ENCODE measurements at regions of chr3 and their contacts with region 1.

Region 1: DNA sequence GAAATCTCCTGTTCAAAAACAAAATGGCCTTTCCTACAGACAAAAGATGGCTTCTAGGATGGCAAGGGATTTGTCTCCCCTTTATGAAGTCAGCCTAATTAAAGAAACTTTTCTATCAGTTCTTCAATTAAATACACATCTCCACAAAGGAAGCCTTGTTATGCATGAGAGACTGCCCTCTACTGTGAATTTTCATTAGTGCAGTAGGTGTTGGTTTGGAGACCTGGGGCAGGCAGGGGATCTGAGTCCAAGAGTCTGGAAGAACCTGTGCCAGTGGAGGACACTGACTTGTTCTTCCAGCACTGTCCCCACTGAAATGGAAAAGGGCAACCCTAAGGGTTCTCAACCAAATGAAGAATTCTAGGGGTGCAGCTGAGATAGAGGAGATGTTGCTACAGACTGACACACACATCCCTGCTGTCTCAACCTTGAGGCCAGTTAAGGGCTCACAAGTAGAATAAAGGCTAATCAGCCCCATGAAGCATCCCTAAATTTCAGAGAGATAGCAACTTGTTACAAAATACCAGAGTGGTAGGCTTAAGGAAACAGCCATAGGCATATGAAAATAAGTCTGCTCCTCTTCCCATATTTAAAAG is 174.0 kb upstream of the PRICKLE2 start:
- DNase-seq: peak; percentile 77
- H3K4me3 ChIP-seq: no peak overlapping the region
- H3K27ac ChIP-seq: no peak overlapping the region
- H3K4me1 ChIP-seq: no peaks in the 10 kb centered on the region
- H3K27me3 ChIP-seq: peaks cover 0 to 6% of the 10 kb centered on the region in 2 experiments
- CTCF ChIP-seq: peak; percentile 61 to 63
- POLR2A ChIP-seq: no peak

Region 2: GRCh38 chr3:64030741-64031140 is 368.6 kb before region 1 on chr3:
- CTCF ChIA-PET with region 1: interaction called, 112 read pairs
- POLR2A ChIA-PET with region 1: no interaction called
- dilution Hi-C with region 1: no loop called
- intact Hi-C with region 1: loop called (anchors 1 kb)
- DNase-seq: peak; percentile 66
- H3K4me3 ChIP-seq: peak overlapping the region in 1 of 3 experiments; percentile 4
- H3K27ac ChIP-seq: no peak overlapping the region
- H3K4me1 ChIP-seq: no peaks in the 10 kb centered on the region
- H3K27me3 ChIP-seq: peaks cover 19 to 45% of the 10 kb centered on the region in 2 experiments
- CTCF ChIP-seq: peak; percentile 77 to 82
- POLR2A ChIP-seq: no peak

Region 3: GRCh38 chr3:64244011-64244942 is 155.0 kb before region 1 on chr3:
- CTCF ChIA-PET with region 1: interaction called, 5 read pairs
- POLR2A ChIA-PET with region 1: no interaction called
- dilution Hi-C with region 1: no loop called
- intact Hi-C with region 1: loop called (anchors 1 kb)
- DNase-seq: peak; percentile 41
- H3K4me3 ChIP-seq: no peak overlapping the region
- H3K27ac ChIP-seq: no peak overlapping the region
- H3K4me1 ChIP-seq: no peaks in the 10 kb centered on the region
- H3K27me3 ChIP-seq: peaks cover 0 to 4% of the 10 kb centered on the region in 2 experiments
- CTCF ChIP-seq: peak; percentile 42 to 51
- POLR2A ChIP-seq: no peak

Region 4: GRCh38 chr3:64262574-64263114 is 136.7 kb before region 1 on chr3:
- CTCF ChIA-PET with region 1: interaction called, 15 read pairs
- POLR2A ChIA-PET with region 1: no interaction called
- dilution Hi-C with region 1: no loop called
- intact Hi-C with region 1: loop called (anchors 1 kb)
- DNase-seq: no peak
- H3K4me3 ChIP-seq: no peak overlapping the region
- H3K27ac ChIP-seq: no peak overlapping the region
- H3K4me1 ChIP-seq: peaks cover 17% of the 10 kb centered on the region
- H3K27me3 ChIP-seq: peaks cover 4% of the 10 kb centered on the region in 2 experiments
- CTCF ChIP-seq: peak in 1 of 2 donors; percentile 5
- POLR2A ChIP-seq: no peak

Region 5: DNA sequence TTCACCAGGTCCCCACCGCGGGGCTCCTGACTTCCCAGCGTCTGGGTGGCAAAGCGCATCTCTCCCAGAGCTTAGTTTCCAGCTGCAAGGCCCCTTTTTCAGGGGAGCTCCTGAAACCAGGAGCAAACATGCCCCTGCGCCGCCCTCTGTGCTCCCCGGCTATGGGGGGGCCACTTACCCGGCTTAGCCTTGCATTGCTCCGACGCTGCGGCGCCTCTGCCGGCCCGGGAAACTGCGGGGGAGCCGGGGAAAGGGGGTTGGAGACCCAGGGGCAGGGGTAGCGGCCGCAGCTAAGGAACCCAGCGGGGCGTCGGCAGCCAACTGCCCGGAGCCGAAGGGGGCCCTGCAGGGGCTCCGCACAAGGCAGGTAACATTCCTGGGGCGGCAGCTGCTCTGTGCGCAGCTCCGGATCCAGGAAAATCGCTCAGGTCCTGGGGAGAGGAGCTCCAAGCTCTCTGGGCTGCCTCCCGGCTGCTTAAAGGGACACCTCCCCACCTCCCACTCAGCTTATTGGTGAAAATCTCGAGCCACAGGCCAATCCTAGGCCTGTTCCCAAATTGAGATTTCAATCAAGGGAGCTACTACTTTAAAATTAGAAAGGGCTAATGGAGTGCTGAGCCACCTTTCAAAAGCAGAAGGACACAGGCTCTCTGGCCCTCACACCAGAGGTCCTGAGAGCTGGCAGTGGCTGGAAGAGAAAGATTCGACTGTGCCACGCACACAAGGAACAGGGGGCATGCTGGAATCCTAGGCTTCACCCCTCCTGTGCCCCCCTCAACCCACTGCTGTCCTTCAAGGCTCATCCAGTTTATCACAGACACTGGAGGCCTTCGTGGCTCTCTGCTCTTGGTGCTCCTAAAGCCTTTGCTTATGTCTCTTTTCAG is 131.3 kb before region 1 on chr3:
- CTCF ChIA-PET with region 1: interaction called, 15 read pairs
- POLR2A ChIA-PET with region 1: no interaction called
- dilution Hi-C with region 1: no loop called
- intact Hi-C with region 1: loop called (anchors 2 kb)
- DNase-seq: peak; percentile 11
- H3K4me3 ChIP-seq: peak overlapping the region; percentile 14 to 39 (median 35)
- H3K27ac ChIP-seq: no peak overlapping the region
- H3K4me1 ChIP-seq: peaks cover 17% of the 10 kb centered on the region
- H3K27me3 ChIP-seq: peaks cover 7 to 8% of the 10 kb centered on the region in 2 experiments
- CTCF ChIP-seq: no peak
- POLR2A ChIP-seq: no peak

Region 6: GRCh38 chr3:64321747-64322146 is 77.6 kb before region 1 on chr3:
- CTCF ChIA-PET with region 1: interaction called, 4 read pairs
- POLR2A ChIA-PET with region 1: no interaction called
- dilution Hi-C with region 1: no loop called
- intact Hi-C with region 1: loop called (anchors 5 kb)
- DNase-seq: no peak
- H3K4me3 ChIP-seq: no peak overlapping the region
- H3K27ac ChIP-seq: no peak overlapping the region
- H3K4me1 ChIP-seq: no peaks in the 10 kb centered on the region
- H3K27me3 ChIP-seq: peaks cover 0 to 3% of the 10 kb centered on the region in 2 experiments
- CTCF ChIP-seq: no peak
- POLR2A ChIP-seq: no peak

Region 7: GRCh38 chr3:64484289-64484992 is 85.1 kb after region 1 on chr3:
- CTCF ChIA-PET with region 1: interaction called, 3 read pairs
- POLR2A ChIA-PET with region 1: no interaction called
- dilution Hi-C with region 1: no loop called
- intact Hi-C with region 1: loop called (anchors 1 kb)
- DNase-seq: peak; percentile 81
- H3K4me3 ChIP-seq: no peak overlapping the region
- H3K27ac ChIP-seq: no peak overlapping the region
- H3K4me1 ChIP-seq: peaks cover 4% of the 10 kb centered on the region
- H3K27me3 ChIP-seq: peaks cover 8 to 13% of the 10 kb centered on the region in 2 experiments
- CTCF ChIP-seq: peak; percentile 78 to 81
- POLR2A ChIP-seq: no peak

Region 8: DNA sequence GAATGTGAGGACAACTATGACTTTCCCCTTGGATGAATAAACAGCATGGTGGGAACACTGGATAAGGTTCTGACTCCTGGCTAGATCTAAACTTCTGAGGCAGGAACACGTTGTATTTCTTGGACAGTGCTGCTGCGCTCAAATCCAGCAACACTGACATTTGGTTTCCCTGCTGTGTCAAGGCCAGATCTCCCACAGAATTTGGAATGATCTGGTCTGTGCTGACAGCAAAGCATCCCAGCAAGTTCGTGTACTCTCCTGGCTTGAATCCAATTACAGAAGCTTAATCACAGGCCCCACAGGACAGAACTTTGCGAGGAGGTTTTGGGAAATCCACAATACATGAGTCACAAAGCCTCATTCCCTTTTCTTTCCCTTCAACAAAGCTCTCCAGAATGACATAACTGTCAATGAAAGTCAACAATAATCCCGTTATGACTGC is 196.0 kb after region 1 on chr3:
- CTCF ChIA-PET with region 1: no interaction called
- POLR2A ChIA-PET with region 1: no interaction called
- dilution Hi-C with region 1: no loop called
- intact Hi-C with region 1: no loop called
- DNase-seq: peak; percentile 77
- H3K4me3 ChIP-seq: no peak overlapping the region
- H3K27ac ChIP-seq: no peak overlapping the region
- H3K4me1 ChIP-seq: peaks cover 3% of the 10 kb centered on the region
- H3K27me3 ChIP-seq: no peaks in the 10 kb centered on the region
- CTCF ChIP-seq: no peak
- POLR2A ChIP-seq: no peak

Measured in endothelial cell of umbilical vein (primary cell).